Endothelial cell of umbilical vein (primary cell): ENCODE measurements at regions of chr1 and their contacts with region 1.

Region 1: DNA sequence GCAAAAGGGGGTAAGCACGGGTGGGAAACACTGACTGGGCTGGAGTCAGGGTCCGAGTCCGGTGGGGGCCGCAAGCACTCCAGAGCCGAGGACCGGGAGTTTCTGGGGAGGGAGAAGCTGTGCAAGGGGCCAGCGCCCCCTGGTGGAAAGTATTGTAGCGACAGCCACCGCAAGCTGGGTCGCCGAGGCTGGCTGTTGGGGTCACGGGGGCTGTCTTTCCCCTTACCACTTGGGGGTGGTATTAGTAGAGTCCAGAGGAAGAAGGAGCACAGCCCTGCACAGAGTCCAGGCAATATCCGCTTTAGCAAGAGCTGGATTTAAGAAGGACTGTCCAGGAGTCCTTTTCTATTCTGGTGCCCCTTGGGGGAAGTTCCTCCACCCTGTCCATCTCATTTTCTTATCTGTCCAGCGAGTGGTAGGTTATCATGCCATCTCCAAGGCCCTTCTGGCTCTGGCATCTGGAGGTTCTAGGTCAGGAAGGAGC is 17.9 kb upstream of the ETV3 start:
- DNase-seq: peak; percentile 60
- H3K4me3 ChIP-seq: no peak overlapping the region
- H3K27ac ChIP-seq: no peak overlapping the region
- H3K4me1 ChIP-seq: peaks cover 23% of the 10 kb centered on the region
- H3K27me3 ChIP-seq: peaks cover 5 to 7% of the 10 kb centered on the region in 2 experiments
- CTCF ChIP-seq: peak; percentile 86 to 93
- POLR2A ChIP-seq: no peak

Region 2: GRCh38 chr1:157045251-157046218 is 110.6 kb before region 1 on chr1 and contains the start of gene ARHGEF11:
- CTCF ChIA-PET with region 1: no interaction called
- POLR2A ChIA-PET with region 1: no interaction called
- dilution Hi-C with region 1: no loop called
- intact Hi-C with region 1: loop called (anchors 1 kb)
- DNase-seq: peak; percentile 89
- H3K4me3 ChIP-seq: peak within 1 kb of the TSS; percentile 59 to 99 (median 86)
- H3K27ac ChIP-seq: peak within 1 kb of the TSS; percentile 90
- H3K4me1 ChIP-seq: peaks cover 32% of the 10 kb centered on the region
- H3K27me3 ChIP-seq: peaks cover 7 to 9% of the 10 kb centered on the region in 2 experiments
- CTCF ChIP-seq: no peak
- POLR2A ChIP-seq: peak; percentile 90
- total RNA-seq, gene ARHGEF11: 27.2 and 28.0 TPM in 2 replicates

Region 3: GRCh38 chr1:157105988-157106812 is 49.9 kb before region 1 on chr1:
- CTCF ChIA-PET with region 1: interaction called, 16 read pairs
- POLR2A ChIA-PET with region 1: interaction called, 4 read pairs
- dilution Hi-C with region 1: no loop called
- intact Hi-C with region 1: loop called (anchors 1 kb)
- DNase-seq: peak; percentile 67
- H3K4me3 ChIP-seq: no peak overlapping the region
- H3K27ac ChIP-seq: peak overlapping the region; percentile 35
- H3K4me1 ChIP-seq: peaks cover 11% of the 10 kb centered on the region
- H3K27me3 ChIP-seq: peaks cover 4% of the 10 kb centered on the region in 2 experiments
- CTCF ChIP-seq: no peak
- POLR2A ChIP-seq: no peak

Region 4: GRCh38 chr1:157138220-157139051 is 17.7 kb before region 1 on chr1 and contains the start of gene ETV3:
- CTCF ChIA-PET with region 1: interaction called, 86 read pairs
- POLR2A ChIA-PET with region 1: interaction called, 7 read pairs
- dilution Hi-C with region 1: no loop called
- intact Hi-C with region 1: loop called (anchors 1 kb)
- DNase-seq: peak; percentile 91
- H3K4me3 ChIP-seq: peak within 1 kb of the TSS; percentile 92 to 99 (median 96)
- H3K27ac ChIP-seq: peak within 1 kb of the TSS; percentile 84
- H3K4me1 ChIP-seq: peaks cover 21% of the 10 kb centered on the region
- H3K27me3 ChIP-seq: no peaks in the 10 kb centered on the region
- CTCF ChIP-seq: no peak
- POLR2A ChIP-seq: peak; percentile 89
- total RNA-seq, gene ETV3: 22.3 and 25.2 TPM in 2 replicates

Region 5: DNA sequence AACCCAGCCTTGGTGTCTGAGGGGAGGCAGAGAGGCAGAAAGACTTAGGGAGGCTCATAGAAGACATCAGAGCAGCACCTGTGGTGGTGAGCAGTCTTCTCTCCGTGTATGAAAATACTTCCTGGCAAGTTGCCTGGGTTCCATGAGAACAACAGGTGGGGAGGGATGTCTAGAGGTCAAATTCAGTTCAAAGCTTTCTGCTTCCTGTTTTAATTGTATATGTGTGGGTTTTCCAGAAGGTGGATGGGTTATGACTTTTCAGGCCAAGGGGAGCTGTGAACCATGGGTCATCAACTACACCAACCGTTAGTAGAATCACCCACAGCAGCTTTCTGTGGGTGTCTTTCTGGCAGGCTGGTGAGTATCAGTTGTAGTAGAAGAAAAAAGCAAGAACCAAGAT is 624.9 kb after region 1 on chr1:
- CTCF ChIA-PET with region 1: no interaction called
- POLR2A ChIA-PET with region 1: no interaction called
- dilution Hi-C with region 1: no loop called
- intact Hi-C with region 1: no loop called
- DNase-seq: no peak
- H3K4me3 ChIP-seq: no peak overlapping the region
- H3K27ac ChIP-seq: no peak overlapping the region
- H3K4me1 ChIP-seq: no peaks in the 10 kb centered on the region
- H3K27me3 ChIP-seq: no peaks in the 10 kb centered on the region
- CTCF ChIP-seq: no peak
- POLR2A ChIP-seq: no peak